ENCODE measurements at regions of chr4 and their contacts with region 1.

Region 1: GRCh38 chr4:102868781-102869568 is at the start of gene CISD2:
- DNase-seq: peak; percentile 96 to 98
- ATAC-seq: peak; percentile 99
- H3K4me3 ChIP-seq: peak within 1 kb of the TSS; percentile 59 to 74
- H3K27ac ChIP-seq: peak within 1 kb of the TSS; percentile 88 to 93
- H3K4me1 ChIP-seq: no peaks in the 10 kb centered on the region
- H3K27me3 ChIP-seq: no peaks in the 10 kb centered on the region
- total RNA-seq, gene CISD2: 16.7 to 19.3 TPM

Region 2: DNA sequence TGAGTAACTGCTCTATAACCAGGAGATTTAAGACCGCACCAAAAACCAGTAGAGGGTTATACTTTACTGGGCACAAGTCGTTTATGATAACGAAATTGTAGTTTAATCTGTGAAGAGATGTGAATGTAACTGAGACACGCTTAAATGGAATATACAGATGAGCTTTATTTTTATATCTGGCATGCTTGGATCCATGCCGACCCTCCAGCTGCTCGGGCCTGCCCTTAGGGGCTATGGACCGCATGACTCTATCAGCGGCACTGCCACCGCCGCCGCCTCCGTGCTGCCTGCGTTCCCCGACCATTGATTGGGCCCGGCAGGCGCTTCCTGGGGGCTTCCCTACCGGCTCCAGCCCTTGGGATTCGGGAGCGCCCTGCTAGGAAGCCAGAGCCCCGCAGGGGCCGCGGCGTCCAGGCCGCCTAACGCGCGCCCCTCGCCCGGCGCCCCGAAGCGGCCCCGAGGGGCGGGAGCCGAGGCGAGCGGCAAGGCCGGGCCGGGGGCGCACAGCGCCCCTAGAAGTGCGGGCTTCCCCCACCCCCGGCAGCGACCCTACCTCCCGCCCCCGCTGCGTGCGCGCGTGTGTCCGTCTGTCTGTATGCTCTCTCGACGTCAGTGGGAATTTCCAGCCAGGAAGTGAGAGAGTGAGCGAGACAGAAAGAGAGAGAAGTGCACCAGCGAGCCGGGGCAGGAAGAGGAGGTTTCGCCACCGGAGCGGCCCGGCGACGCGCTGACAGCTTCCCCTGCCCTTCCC is 368.1 kb before region 1 on chr4 and contains the start of gene NFKB1:
- intact Hi-C with region 1: loop called in 1 of 2 experiments (anchors 5 kb)
- DNase-seq: peak; percentile 86
- ATAC-seq: peak; percentile 67
- H3K4me3 ChIP-seq: peak within 1 kb of the TSS; percentile 85 to 90
- H3K27ac ChIP-seq: peak within 1 kb of the TSS; percentile 88 to 97
- H3K4me1 ChIP-seq: peaks cover 3 to 6% of the 10 kb centered on the region in 2 donors
- H3K27me3 ChIP-seq: peaks cover 0 to 2% of the 10 kb centered on the region in 2 donors
- total RNA-seq, gene NFKB1: 39.8 to 48.4 TPM

Region 3: GRCh38 chr4:102620697-102621497 is 248.1 kb before region 1 on chr4:
- intact Hi-C with region 1: loop called in 1 of 2 experiments (anchors 10 kb)
- DNase-seq: no peak
- ATAC-seq: peak; percentile 88
- H3K4me3 ChIP-seq: no peak overlapping the region
- H3K27ac ChIP-seq: peak overlapping the region in 1 of 2 donors; percentile 58
- H3K4me1 ChIP-seq: peaks cover 0 to 2% of the 10 kb centered on the region in 2 donors
- H3K27me3 ChIP-seq: no peaks in the 10 kb centered on the region

Region 4: DNA sequence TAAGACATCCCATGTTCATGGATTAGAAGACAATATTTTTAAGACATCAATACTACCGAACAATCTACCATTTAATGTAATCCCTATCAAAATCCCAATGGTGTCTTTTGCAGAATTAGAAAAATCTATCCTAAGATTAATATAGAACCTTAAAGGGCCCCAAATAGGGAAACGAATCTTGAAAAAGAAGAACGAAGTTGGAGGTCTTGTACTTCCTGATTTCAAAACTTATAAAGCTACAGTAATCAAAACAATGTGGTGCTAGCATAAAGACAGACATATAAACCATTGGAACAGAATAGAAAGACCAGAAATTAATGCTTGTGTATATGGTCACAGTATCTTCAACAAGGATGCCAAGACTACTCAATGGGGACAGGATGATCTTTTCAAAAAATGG is 287.1 kb after region 1 on chr4:
- intact Hi-C with region 1: no loop called
- DNase-seq: no peak
- ATAC-seq: no peak
- H3K4me3 ChIP-seq: no peak overlapping the region
- H3K27ac ChIP-seq: no peak overlapping the region
- H3K4me1 ChIP-seq: no peaks in the 10 kb centered on the region
- H3K27me3 ChIP-seq: no peaks in the 10 kb centered on the region